AG04450 (cell line): ENCODE measurements at regions of chr19 and their contacts with region 1.

Region 1: DNA sequence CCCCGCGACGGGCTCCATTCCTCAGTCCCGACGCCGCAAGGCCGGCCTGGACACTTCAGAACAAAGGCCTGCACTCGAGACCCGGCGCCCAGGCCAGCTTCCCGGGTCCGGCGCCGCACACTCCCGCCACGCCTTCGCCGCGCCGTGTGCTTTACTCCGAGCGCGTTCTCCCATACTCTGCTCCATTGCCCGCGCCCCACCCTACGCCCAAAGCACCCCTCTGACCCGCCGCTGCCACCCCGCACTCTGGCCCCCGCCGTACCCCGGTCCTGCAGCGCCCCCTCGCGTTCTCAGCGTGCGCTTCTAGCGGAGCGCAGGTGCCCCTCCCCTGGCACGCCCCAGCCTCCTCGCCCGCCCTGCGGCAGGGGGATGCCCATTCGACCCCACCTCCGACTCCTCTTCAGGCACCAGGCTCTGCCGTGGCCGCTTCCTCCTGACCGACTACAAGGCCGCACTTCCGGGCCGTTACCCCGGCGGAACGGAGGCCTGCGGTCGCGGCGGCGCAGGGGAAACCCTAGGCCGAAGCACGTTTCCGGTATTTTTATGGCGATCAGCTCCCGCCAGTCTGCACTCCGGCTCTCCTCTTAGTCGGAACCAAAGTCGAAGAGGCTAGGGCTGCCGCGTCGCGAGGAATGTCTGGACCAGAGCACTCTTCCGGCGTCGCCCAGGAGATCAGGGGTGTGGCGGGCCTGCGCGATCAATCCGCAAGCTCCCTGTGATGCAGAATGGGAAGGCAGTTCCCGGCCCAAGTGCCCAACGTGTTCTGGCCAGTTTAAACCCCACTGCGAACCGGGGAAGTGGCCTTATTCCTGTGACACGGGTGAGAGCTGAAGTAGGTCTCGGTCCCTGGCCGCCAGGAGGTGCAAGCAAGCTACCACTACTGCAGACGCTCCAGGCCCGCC is at the start of gene ZBTB45:
- DNase-seq: peak; percentile 92
- H3K4me3 ChIP-seq: peak within 1 kb of the TSS; percentile 89
- H3K27ac ChIP-seq: peak within 1 kb of the TSS; percentile 93
- H3K27me3 ChIP-seq: no peaks in the 10 kb centered on the region
- CTCF ChIP-seq: peak; percentile 69
- polyA plus RNA-seq, gene ZBTB45: 4.2 and 6.8 TPM in 2 replicates

Region 2: DNA sequence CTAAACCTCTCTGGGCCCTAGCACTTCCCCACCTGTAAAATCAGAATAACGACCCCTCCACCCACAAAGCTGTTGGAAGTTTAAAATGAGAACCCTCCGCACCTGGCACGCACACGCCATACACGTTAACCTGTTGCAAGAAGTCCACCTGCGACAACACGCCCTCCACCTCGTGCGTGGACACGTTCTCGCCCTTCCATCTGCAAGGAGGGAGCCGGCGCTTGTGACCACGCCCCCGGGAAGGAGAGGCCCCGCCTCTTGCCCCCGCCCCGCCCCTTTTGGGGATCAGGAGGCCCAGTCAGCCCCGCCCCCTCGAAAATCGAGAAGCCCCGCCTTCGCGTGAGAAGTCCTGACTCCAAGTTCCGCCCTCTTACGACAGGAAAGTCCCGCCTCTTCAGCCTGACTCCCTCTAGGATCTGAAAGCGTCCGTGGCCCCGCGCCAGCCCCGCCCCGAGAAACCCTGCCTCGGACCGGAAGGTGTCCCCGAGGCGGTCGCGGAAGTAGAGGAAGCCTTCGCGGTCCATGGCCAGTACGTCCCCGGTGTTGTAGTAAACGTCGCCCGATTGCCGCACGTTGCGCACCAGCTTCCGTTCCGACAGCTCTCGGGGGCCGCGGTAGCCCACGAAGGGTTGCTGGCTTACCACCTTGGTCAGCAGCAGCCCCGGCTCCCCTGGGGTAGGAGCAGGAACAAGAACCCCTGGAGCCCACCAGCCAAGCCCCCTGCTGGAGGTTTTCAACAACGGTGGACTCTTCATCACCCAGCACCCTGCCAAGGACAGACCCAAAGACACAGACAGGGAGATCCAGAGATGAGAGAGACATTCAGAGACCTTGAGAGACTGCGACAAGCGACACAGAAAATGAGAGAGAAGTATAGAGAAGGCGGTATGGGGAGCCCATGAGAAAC is 20.3 kb before region 1 on chr19:
- CTCF ChIA-PET with region 1: interaction called, 14 read pairs
- POLR2A ChIA-PET with region 1: interaction called, 6 read pairs
- DNase-seq: peak; percentile 96
- H3K4me3 ChIP-seq: peak overlapping the region; percentile 70
- H3K27ac ChIP-seq: peak overlapping the region; percentile 70
- H3K27me3 ChIP-seq: no peaks in the 10 kb centered on the region
- CTCF ChIP-seq: peak; percentile 50; the same call in 1 of the 2 replicates

Region 3: DNA sequence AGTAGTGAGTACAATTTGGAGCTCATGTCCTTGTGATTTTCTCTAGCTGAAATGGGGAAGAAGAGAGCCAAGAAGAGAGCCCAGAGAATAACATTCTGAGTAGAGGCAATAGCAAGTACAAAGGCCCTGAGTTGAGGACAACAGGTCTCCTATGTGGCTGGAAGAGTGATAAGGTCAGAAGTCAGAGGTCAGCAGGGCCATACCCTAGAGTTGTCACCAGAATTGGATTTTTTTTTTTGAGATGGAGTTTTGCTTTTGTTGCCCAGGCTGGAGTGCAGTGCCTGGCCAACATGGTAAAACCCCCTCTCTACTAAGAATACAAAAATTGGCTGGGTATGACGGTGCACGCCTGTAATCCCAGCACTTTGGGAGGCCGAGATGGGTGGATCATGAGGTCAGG is 16.3 kb after region 1 on chr19:
- CTCF ChIA-PET with region 1: interaction called, 13 read pairs
- POLR2A ChIA-PET with region 1: interaction called, 3 read pairs
- DNase-seq: no peak
- H3K4me3 ChIP-seq: no peak overlapping the region
- H3K27ac ChIP-seq: no peak overlapping the region
- H3K27me3 ChIP-seq: peaks cover 41% of the 10 kb centered on the region
- CTCF ChIP-seq: no peak

Region 4: GRCh38 chr19:58543826-58544590 is 24.4 kb after region 1 on chr19 and contains the start of gene TRIM28:
- CTCF ChIA-PET with region 1: interaction called, 5 read pairs
- POLR2A ChIA-PET with region 1: interaction called, 54 read pairs
- DNase-seq: peak; percentile 99
- H3K4me3 ChIP-seq: peak within 1 kb of the TSS; percentile 84
- H3K27ac ChIP-seq: peak within 1 kb of the TSS; percentile 97
- H3K27me3 ChIP-seq: peaks cover 6% of the 10 kb centered on the region
- CTCF ChIP-seq: no peak
- polyA plus RNA-seq, gene TRIM28: 313 and 413 TPM in 2 replicates

Region 5: GRCh38 chr19:58558623-58559274 is 39.1 kb after region 1 on chr19:
- CTCF ChIA-PET with region 1: interaction called, 18 read pairs
- POLR2A ChIA-PET with region 1: interaction called, 30 read pairs
- DNase-seq: peak; percentile 97
- H3K4me3 ChIP-seq: peak overlapping the region; percentile 95
- H3K27ac ChIP-seq: peak overlapping the region; percentile 99
- H3K27me3 ChIP-seq: peaks cover 1% of the 10 kb centered on the region
- CTCF ChIP-seq: no peak

Region 6: DNA sequence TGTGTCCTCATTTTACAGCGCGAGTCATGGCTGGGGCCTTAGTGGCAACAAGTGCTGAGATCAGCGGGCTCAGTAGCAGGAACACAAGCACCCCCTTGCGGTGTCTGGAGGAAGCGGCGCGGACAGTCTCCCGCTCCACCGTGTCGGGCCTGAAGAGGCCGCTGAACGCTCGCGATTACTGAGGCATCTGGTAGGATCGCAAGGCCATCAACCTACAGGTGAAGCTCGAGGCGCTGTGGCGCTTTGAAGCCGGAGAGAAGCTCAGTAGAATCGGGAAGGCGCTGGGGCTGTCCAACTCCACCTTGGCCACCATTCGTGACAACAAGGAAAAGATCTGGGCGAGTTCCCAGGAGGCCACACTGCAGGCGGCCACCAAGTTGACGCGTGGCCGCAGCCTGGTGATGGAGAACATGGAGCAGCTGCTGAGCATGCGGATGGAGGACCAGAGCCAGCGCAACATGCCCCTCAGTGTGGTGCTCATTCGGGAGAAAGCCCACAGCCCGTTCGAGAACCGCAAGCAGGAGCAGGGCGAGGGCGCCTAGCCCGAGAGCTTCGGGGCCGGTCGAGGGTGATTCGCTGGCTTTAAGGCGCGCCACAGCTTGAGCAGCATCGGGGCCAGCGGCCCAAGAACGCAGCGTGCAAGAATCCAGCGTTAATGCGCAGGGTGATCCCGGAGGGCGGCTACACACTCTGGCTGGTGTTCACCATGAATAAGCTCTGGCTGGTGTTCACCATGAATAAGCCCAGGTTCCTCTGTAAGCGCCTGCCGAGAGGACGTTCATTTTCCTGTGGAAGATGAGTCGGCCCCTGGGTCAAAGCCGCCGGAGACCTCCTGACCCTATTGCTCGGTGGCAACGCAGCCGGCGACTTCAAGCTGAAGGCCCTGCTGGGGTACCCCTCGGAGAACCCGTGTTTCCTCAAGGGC is 61.9 kb after region 1 on chr19:
- CTCF ChIA-PET with region 1: interaction called, 22 read pairs
- POLR2A ChIA-PET with region 1: interaction called, 3 read pairs
- DNase-seq: peak; percentile 74
- H3K4me3 ChIP-seq: no peak overlapping the region
- H3K27ac ChIP-seq: peak overlapping the region; percentile 59
- H3K27me3 ChIP-seq: no peaks in the 10 kb centered on the region
- CTCF ChIP-seq: peak; percentile 98